ENCODE measurements at regions of chr10 and their contacts with region 1.

Region 1: DNA sequence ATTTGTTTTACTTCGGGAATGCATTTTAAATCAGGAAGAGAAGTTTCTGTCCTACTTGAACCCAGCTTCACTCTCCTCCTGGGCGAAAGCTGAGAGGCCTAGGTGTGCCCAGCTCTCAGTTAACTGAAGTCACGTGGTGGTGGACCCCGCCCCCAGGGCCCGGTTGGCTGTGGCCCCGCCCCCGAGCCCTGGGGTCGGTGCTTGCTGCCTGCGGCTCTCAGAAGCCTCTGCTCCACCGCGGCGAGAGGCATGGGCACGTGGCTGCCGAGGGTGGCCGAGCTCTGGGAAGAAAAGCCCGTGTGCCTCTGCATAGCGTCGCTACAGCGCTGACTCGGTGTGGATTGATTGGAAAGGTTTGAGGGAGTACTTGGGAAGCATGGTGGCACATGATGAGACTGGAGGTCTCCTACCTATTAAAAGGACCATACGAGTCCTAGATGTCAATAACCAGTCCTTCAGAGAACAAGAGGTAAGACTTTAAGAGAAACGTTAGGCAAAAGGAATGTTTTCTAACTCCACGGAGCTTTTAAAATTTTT is 34.1 kb downstream of the NET1 start:
- DNase-seq: peak; percentile 94 to 98
- H3K4me3 ChIP-seq: peak overlapping the region; percentile 96
- H3K4me3 Mint-ChIP-seq: peak overlapping the region; percentile 91
- H3K27ac Mint-ChIP-seq: peak overlapping the region; percentile 82
- H3K4me1 ChIP-seq: peaks cover 27% of the 10 kb centered on the region
- H3K4me1 Mint-ChIP-seq: peaks cover 13% of the 10 kb centered on the region
- H3K27me3 ChIP-seq: no peaks in the 10 kb centered on the region
- H3K27me3 Mint-ChIP-seq: no peaks in the 10 kb centered on the region
- CTCF ChIP-seq: peak in 1 of 2 experiments; percentile 6

Region 2: GRCh38 chr10:5482017-5482416 is 35.6 kb after region 1 on chr10:
- CTCF ChIA-PET with region 1: no interaction called
- POLR2A ChIA-PET with region 1: no interaction called
- intact Hi-C with region 1: no loop called
- DNase-seq: peak in 1 of 2 experiments; percentile 13
- H3K4me3 ChIP-seq: no peak overlapping the region
- H3K4me3 Mint-ChIP-seq: no peak overlapping the region
- H3K27ac Mint-ChIP-seq: peak overlapping the region; percentile 42
- H3K4me1 ChIP-seq: no peaks in the 10 kb centered on the region
- H3K4me1 Mint-ChIP-seq: no peaks in the 10 kb centered on the region
- H3K27me3 ChIP-seq: no peaks in the 10 kb centered on the region
- H3K27me3 Mint-ChIP-seq: no peaks in the 10 kb centered on the region
- CTCF ChIP-seq: no peak

Region 3: DNA sequence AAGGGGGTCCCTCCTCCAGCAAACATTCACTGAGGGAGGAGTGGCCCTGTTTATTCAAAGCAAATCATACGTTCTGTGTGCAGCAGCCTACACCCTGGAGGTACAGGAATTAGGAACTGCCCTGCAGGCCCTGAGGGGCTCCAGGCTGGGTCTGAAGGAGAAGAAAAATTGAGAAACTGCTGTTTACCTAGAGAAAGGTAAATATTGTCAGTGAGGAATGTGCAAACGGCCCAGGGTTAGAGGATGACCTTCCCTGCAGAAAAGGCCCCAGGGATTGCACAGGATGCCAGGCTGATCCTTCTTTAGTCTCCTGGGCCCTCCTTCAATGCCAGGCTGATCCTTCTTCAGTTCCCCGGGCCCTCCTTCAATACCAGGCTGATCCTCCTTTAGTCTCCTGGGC is 47.2 kb after region 1 on chr10:
- CTCF ChIA-PET with region 1: interaction called, 4 read pairs
- POLR2A ChIA-PET with region 1: interaction called, 6 read pairs
- intact Hi-C with region 1: loop called (anchors 1 kb)
- DNase-seq: peak; percentile 89 to 92
- H3K4me3 ChIP-seq: peak overlapping the region; percentile 19
- H3K4me3 Mint-ChIP-seq: peak overlapping the region; percentile 55
- H3K27ac Mint-ChIP-seq: peak overlapping the region; percentile 83
- H3K4me1 ChIP-seq: peaks cover 53% of the 10 kb centered on the region
- H3K4me1 Mint-ChIP-seq: peaks cover 8% of the 10 kb centered on the region
- H3K27me3 ChIP-seq: no peaks in the 10 kb centered on the region
- H3K27me3 Mint-ChIP-seq: no peaks in the 10 kb centered on the region
- CTCF ChIP-seq: no peak

Region 4: GRCh38 chr10:5518138-5518537 is 71.7 kb after region 1 on chr10:
- CTCF ChIA-PET with region 1: interaction called, 6 read pairs
- POLR2A ChIA-PET with region 1: interaction called, 9 read pairs
- intact Hi-C with region 1: loop called (anchors 1 kb)
- DNase-seq: peak; percentile 93 to 95
- H3K4me3 ChIP-seq: no peak overlapping the region
- H3K4me3 Mint-ChIP-seq: peak overlapping the region; percentile 44
- H3K27ac Mint-ChIP-seq: peak overlapping the region; percentile 70
- H3K4me1 ChIP-seq: peaks cover 56% of the 10 kb centered on the region
- H3K4me1 Mint-ChIP-seq: peaks cover 47% of the 10 kb centered on the region
- H3K27me3 ChIP-seq: no peaks in the 10 kb centered on the region
- H3K27me3 Mint-ChIP-seq: no peaks in the 10 kb centered on the region
- CTCF ChIP-seq: no peak

Region 5: GRCh38 chr10:5565671-5566577 is 119.5 kb after region 1 on chr10:
- CTCF ChIA-PET with region 1: interaction called, 3 read pairs
- POLR2A ChIA-PET with region 1: interaction called, 10 read pairs
- intact Hi-C with region 1: loop called (anchors 2 kb)
- DNase-seq: peak in 1 of 2 experiments; percentile 30
- H3K4me3 ChIP-seq: no peak overlapping the region
- H3K4me3 Mint-ChIP-seq: no peak overlapping the region
- H3K27ac Mint-ChIP-seq: peak overlapping the region; percentile 3
- H3K4me1 ChIP-seq: peaks cover 37% of the 10 kb centered on the region
- H3K4me1 Mint-ChIP-seq: peaks cover 43% of the 10 kb centered on the region
- H3K27me3 ChIP-seq: no peaks in the 10 kb centered on the region
- H3K27me3 Mint-ChIP-seq: no peaks in the 10 kb centered on the region
- CTCF ChIP-seq: no peak

Region 6: GRCh38 chr10:5629303-5630111 is 183.0 kb after region 1 on chr10:
- CTCF ChIA-PET with region 1: interaction called, 11 read pairs
- POLR2A ChIA-PET with region 1: interaction called, 5 read pairs
- intact Hi-C with region 1: no loop called
- DNase-seq: peak; percentile 86 to 92
- H3K4me3 ChIP-seq: no peak overlapping the region
- H3K4me3 Mint-ChIP-seq: no peak overlapping the region
- H3K27ac Mint-ChIP-seq: no peak overlapping the region
- H3K4me1 ChIP-seq: peaks cover 21% of the 10 kb centered on the region
- H3K4me1 Mint-ChIP-seq: peaks cover 25% of the 10 kb centered on the region
- H3K27me3 ChIP-seq: no peaks in the 10 kb centered on the region
- H3K27me3 Mint-ChIP-seq: no peaks in the 10 kb centered on the region
- CTCF ChIP-seq: peak; percentile 97 to 98

Region 7: DNA sequence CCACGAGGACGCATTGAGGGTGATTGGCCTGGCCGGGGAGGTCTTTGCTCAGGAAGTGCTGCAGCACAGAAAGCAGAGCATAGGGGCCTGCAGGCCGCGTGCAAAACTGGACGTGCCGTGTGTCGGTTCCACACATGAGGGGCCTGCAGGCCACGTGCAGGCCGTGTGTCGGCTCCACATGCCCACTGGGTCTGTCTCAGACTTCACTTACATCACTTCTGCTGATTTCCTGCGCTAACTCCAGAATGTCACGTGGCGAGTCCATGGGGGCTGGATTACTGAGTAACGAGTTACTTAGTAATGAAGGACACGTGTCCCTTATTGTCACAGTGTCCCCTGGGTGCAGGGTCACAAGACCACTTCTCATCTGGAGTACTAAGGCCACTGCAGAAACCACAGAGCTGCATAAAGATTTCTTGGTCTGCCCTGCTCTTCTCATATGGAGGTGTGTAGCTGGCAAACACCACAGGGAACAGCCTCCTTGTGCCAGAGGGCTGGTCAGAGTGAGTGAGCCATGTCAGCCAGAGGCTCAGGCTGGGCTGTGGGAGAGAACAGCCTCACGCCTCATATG is 305.9 kb after region 1 on chr10:
- CTCF ChIA-PET with region 1: no interaction called
- POLR2A ChIA-PET with region 1: no interaction called
- intact Hi-C with region 1: loop called (anchors 10 kb)
- DNase-seq: no peak
- H3K4me3 ChIP-seq: no peak overlapping the region
- H3K4me3 Mint-ChIP-seq: no peak overlapping the region
- H3K27ac Mint-ChIP-seq: peak overlapping the region; percentile 34
- H3K4me1 ChIP-seq: no peaks in the 10 kb centered on the region
- H3K4me1 Mint-ChIP-seq: no peaks in the 10 kb centered on the region
- H3K27me3 ChIP-seq: no peaks in the 10 kb centered on the region
- H3K27me3 Mint-ChIP-seq: no peaks in the 10 kb centered on the region
- CTCF ChIP-seq: no peak

Measured in Caco-2 (cell line).